ENCODE measurements at regions of chr10 and their contacts with region 1.

Region 1: GRCh38 chr10:78231939-78232338 is 198.3 kb downstream of the RPS24 start:
- DNase-seq: peak in 2 of 3 donors; percentile 36 to 47
- H3K4me3 ChIP-seq: no peak overlapping the region
- H3K4me3 Mint-ChIP-seq: no peak overlapping the region
- H3K27ac ChIP-seq: no peak overlapping the region
- H3K27ac Mint-ChIP-seq: peak overlapping the region in 1 of 7 donors; percentile 19
- H3K4me1 ChIP-seq: peaks cover 6 to 10% of the 10 kb centered on the region in 2 donors
- H3K4me1 Mint-ChIP-seq: peaks cover 8% of the 10 kb centered on the region
- H3K27me3 ChIP-seq: no peaks in the 10 kb centered on the region
- H3K27me3 Mint-ChIP-seq: peaks cover 7 to 12% (median 11%) of the 10 kb centered on the region in 3 donors
- CTCF ChIP-seq: peak; percentile 41

Region 2: GRCh38 chr10:78028438-78029268 is 203.3 kb before region 1 on chr10:
- intact Hi-C with region 1: no loop called
- DNase-seq: no peak
- H3K4me3 ChIP-seq: peak overlapping the region; percentile 69 to 98 (median 74)
- H3K4me3 Mint-ChIP-seq: peak overlapping the region; percentile 100
- H3K27ac ChIP-seq: peak overlapping the region; percentile 39 to 75
- H3K27ac Mint-ChIP-seq: peak overlapping the region; percentile 81 to 96 (median 91)
- H3K4me1 ChIP-seq: peaks cover 25% of the 10 kb centered on the region in 2 donors
- H3K4me1 Mint-ChIP-seq: peaks cover 29% of the 10 kb centered on the region
- H3K27me3 ChIP-seq: no peaks in the 10 kb centered on the region
- H3K27me3 Mint-ChIP-seq: peaks cover 0 to 6% (median 2%) of the 10 kb centered on the region in 3 donors
- CTCF ChIP-seq: no peak

Region 3: DNA sequence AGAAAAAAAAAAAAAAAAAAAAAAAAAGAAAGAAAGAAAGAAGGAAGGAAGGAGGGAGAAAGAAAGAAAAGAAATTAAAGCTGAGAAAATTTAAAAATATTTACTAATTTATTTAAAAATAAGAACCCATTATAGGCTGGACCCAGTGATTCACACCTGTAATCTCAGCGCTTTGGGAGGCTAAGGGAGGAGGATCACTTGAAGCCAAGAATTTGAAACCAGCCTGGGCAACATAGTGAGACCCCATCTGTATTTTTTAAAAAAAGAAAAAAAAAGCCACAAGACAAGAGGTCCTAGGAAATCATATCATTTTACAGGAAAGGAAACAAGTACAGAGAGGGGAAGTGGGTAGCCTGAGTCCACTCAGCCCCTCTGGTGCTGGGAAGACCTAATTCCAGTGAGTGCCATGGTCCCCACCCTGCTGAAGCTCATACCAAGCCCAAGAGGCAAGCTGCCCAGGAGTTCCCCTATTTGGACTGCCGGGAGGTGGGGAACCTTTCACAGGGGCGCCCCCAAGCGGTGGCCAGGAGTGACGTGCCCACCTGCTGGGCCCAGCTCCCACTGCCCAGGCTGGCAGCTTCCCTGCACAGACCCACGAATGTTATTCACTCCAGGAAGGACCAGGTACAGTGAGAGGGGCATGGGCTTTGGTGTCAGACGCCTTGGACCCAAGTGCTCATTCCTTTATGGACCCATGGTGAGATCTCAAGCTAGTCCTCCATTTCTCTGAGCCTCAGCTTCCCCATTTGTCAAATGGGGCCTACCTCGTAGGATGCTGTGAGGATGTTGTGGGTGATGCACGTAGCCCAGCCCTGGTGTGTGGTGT is 970.5 kb after region 1 on chr10:
- intact Hi-C with region 1: loop called (anchors 5 to 10 kb)
- DNase-seq: peak; percentile 48 to 65 (median 57)
- H3K4me3 ChIP-seq: no peak overlapping the region
- H3K4me3 Mint-ChIP-seq: no peak overlapping the region
- H3K27ac ChIP-seq: no peak overlapping the region
- H3K27ac Mint-ChIP-seq: peak overlapping the region in 2 of 7 donors; percentile 37 to 50
- H3K4me1 ChIP-seq: no peaks in the 10 kb centered on the region
- H3K4me1 Mint-ChIP-seq: no peaks in the 10 kb centered on the region
- H3K27me3 ChIP-seq: no peaks in the 10 kb centered on the region
- H3K27me3 Mint-ChIP-seq: peaks cover 0 to 6% (median 1%) of the 10 kb centered on the region in 3 donors
- CTCF ChIP-seq: peak; percentile 66